HEK293T (cell line): ENCODE measurements at regions of chr17 and their contacts with region 1.

Region 1: DNA sequence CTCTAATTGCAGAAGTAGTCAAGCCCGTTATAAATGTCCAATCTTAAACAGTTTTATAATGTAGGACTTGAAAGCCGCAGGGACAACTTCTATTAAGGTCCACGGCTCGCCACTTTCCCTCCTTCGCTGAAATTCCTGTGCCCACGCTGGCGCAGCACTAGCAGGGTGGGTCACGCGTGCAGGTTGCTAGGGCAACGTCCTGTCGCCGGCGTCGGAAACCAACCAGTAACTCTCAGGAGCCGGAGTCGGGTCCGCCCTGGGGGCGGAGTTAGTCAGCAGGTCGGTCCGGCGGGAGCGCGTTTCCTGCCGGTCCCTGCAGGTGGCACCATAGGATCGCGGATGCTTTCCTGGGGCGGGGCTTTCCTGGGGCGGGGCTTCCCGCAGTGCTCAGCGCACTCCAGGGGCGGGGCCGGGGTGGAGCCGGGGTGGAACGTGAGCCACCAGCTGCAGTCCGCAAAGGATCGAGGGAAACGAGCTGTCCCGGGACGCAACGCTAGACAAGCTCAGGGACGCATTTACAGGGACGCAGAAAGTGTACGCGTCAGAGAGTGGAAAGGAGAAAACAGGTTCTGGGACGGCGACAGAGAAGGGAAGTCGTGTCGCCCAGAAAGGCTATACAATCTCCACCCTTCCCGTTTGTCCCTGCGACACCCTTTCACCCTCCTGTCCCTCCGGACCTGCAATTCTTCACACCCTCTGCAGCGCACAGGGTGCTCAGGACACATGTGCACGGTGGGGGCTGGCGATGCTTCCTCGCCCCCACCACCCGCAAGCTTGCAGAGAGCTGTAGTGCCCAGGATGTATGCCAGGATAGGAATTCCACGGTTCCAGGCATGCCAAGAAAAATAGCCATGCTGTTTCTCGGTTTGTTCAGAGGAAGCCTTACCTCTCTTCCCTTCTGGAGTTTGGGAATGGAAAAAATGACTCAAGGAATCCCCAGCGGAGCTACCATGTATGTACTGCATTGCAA is 12.4 kb downstream of the COPZ2 start:
- DNase-seq: peak; percentile 98

Region 2: DNA sequence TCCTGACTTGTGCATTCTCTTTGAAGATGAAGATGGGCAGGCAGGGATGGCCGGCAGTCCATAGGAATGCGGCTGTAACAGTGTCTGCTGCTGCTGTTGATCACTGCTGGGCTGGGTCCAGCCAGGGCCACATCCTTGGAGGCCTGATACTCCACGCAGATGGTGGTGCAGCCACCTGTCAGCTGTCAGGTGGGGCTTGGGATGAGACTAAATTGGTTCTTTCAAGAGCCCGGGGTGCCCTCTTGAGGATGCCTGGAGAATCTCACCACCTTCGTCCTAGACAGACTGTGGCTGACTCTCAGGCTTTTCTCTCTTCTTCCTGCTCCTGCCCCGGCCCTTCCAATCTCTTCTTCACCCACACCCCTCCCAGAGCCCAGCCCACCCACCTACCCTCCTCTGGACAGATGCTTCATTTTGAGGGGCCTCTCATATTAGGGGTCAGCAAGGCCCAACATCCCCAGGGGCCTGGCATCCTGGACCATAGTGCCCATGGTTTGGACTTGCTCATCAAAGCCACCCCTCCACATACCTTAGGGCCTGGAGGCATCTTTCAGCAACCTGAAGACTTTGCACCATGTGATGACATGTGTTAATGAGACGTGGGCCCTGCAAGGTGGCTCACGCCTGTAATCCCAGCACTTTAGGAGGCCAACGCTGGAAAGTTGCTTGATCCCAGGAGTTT is 222.7 kb before region 1 on chr17:
- CTCF ChIA-PET with region 1: no interaction called
- POLR2A ChIA-PET with region 1: no interaction called
- DNase-seq: peak; percentile 75

Region 3: DNA sequence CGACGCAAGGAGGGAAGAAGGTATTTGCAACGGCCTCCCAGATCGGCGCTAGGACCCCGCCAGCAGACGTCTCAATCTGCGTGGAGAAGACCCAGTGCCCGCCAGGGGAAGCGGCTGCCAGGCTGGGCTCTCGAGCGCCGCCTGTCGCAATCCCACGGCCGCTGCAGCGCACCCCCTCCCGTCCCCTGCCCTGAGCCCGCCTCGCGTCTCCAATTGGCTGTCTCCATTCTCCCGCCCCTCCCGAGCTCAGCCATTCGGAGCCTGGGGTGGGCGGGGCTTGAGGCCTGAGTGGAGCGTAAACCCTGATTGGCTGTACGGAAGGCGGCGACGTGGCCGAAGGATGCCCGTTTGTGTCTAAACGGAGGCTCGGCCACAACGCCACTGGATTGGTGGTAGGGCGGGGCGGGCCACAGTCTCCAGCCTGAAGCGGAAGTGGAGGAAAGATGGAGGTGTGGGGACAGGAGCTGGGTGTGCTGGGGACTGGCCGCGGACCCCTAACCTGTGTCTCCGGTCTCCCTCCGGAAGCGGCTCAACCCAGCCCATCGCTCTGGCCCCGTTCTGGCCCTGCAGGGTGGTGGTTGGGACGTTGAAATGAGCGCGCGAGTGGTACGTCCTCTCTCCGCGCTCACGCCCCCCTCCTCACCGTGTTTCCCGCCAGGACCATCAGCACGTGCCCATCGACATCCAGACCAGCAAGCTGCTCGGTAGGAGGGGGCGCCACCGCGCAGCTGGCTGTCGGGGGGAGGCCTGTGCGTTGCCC is 54.3 kb before region 1 on chr17 and contains the start of gene CDK5RAP3:
- CTCF ChIA-PET with region 1: interaction called, 3 read pairs
- POLR2A ChIA-PET with region 1: interaction called, 11 read pairs
- DNase-seq: peak; percentile 99

Region 4: DNA sequence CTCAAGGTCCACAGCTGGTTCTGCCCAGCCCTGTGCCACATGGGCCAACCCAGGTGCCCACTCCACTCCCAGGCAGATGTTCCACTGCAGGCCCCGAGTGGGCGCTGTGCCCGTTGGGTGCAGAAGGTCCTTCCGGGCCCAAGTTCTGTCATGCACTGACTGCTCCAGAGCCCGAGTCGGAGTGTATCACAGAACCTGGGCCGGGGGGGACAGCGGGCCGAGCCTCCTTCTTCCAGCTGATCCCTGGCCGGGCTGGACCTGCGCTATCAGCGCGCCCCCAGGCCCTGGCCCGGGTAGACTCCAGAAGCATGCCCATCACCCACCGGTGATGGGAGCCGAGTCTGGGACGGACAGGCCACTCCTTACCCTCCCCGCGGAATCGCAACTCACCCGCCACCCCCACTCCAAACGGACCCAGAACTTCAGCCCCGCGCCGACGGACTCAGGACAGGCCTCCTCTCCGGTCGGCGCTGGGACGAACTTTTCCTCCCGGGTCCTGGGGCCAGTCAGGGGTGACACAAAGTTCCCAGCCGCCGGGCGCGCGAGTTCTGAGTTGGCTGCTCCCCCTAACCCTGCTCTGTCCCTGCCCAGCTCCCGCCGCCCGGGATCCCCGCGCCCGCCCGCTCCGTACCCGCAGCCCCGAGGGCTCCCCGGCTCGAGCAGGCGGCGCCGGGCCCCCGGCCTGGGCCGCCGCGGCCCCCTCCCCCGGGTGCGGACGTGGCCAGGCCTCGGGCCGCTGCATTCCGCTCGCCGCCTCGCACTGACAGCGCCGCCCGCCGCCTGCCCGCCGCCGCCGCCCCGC is 12.0 kb after region 1 on chr17 and contains the start of gene COPZ2:
- CTCF ChIA-PET with region 1: interaction called, 12 read pairs
- POLR2A ChIA-PET with region 1: no interaction called
- DNase-seq: no peak

Region 5: GRCh38 chr17:48074315-48075081 is 49.3 kb after region 1 on chr17:
- CTCF ChIA-PET with region 1: interaction called, 27 read pairs
- POLR2A ChIA-PET with region 1: interaction called, 3 read pairs
- DNase-seq: peak; percentile 63

Region 6: GRCh38 chr17:48131216-48131824 is 106.1 kb after region 1 on chr17:
- CTCF ChIA-PET with region 1: interaction called, 15 read pairs
- POLR2A ChIA-PET with region 1: no interaction called
- DNase-seq: peak; percentile 82